ENCODE measurements at regions of chrX and their contacts with region 1.

Region 1: DNA sequence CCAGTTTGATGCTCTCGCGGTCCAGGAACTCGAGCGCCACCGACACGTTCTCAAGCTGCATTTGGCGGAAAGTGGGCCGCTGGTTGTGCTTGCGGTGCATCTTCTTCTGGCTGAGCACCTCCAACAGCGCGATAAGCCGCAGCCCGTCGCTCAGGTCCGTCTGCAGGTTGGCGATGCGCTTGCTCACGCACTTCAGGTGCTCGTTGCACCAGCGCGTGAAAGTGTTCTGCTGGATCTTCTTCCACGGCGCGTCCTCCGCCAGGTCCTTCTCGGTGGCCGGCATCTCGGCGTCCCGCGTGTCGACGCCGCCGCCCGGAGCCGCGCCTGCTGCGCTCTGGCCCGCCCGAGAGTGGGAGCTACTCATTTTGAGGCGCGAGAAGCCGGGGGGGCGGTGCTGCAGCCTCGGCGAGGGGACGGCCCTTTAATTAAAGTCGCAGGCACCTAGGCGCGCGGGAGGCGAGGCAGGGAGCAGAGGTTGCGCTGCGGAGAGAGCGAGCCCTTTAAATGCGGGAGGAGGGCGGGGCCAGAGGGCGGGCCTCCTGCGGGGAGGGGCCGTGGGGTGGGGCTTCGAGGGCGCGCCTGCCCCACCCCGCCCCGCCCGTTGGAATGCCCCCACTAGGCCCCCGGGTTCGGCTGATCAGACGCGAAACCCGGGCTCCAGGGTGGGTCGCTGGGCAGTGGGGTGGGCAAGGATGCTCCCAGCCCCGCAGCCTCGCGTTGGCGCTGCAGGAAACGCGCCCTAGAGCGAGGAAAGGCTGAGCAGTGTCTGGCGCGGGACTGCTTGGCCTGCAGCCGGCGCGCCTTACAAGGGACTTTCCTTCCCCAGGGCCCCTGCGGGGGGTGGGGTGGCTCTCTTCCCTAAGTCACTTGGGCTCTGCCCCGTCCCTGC is 3.3 kb downstream of the FLNA start:
- DNase-seq: peak; percentile 95
- H3K4me3 Mint-ChIP-seq: peak overlapping the region; percentile 79
- H3K27ac Mint-ChIP-seq: peak overlapping the region; percentile 82
- H3K4me1 Mint-ChIP-seq: peaks cover 36% of the 10 kb centered on the region
- H3K27me3 Mint-ChIP-seq: no peaks in the 10 kb centered on the region

Region 2: DNA sequence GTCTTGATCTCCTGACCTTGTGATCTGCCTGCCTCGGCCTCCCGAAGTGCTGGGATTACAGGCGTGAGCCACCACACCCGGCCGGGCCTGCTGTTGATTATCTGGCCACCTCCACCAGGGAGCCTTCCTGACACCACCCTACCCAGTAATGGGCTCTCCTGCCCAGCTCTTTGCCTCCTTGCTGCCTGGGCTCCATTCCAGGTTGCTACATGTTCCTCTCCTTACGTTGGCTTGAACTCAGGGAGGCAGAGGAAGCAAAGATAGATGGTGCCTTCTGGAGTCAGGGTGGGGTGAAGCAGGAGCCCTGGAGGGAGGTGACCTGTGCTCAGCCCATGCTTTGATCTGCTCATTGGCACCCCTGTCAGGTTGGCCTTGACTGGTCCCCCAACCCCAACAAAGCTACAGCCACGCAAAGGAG is 23.0 kb before region 1 on chrX:
- CTCF ChIA-PET with region 1: no interaction called
- POLR2A ChIA-PET with region 1: interaction called, 22 read pairs
- DNase-seq: no peak
- H3K4me3 Mint-ChIP-seq: peak overlapping the region; percentile 30
- H3K27ac Mint-ChIP-seq: peak overlapping the region; percentile 81
- H3K4me1 Mint-ChIP-seq: peaks cover 54% of the 10 kb centered on the region
- H3K27me3 Mint-ChIP-seq: no peaks in the 10 kb centered on the region

Region 3: DNA sequence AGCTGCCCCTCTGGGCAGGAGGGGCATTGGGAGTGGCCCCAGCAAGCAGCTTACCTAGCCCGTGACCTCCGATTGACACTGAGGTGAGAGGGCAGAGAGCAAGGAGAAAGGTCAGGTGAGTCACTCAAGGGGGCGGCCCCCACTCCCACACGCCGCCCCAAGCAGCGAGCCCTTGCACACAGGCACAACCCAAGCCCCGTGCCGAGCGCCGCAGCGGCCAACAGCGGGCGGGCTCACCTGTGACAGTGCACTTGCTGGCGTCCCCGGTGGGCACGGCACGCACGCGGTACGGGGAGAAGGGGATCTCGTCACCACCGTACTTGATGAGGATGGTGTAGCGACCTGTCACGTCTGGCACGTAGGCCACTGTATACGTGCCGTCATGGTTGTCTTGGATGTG is 13.9 kb before region 1 on chrX:
- CTCF ChIA-PET with region 1: no interaction called
- POLR2A ChIA-PET with region 1: interaction called, 23 read pairs
- DNase-seq: no peak
- H3K4me3 Mint-ChIP-seq: no peak overlapping the region
- H3K27ac Mint-ChIP-seq: no peak overlapping the region
- H3K4me1 Mint-ChIP-seq: peaks cover 73% of the 10 kb centered on the region
- H3K27me3 Mint-ChIP-seq: no peaks in the 10 kb centered on the region

Region 4: GRCh38 chrX:154384284-154384892 is 13.3 kb after region 1 on chrX:
- CTCF ChIA-PET with region 1: interaction called, 4 read pairs
- POLR2A ChIA-PET with region 1: interaction called, 17 read pairs
- DNase-seq: no peak
- H3K4me3 Mint-ChIP-seq: no peak overlapping the region
- H3K27ac Mint-ChIP-seq: no peak overlapping the region
- H3K4me1 Mint-ChIP-seq: peaks cover 11% of the 10 kb centered on the region
- H3K27me3 Mint-ChIP-seq: no peaks in the 10 kb centered on the region

Region 5: DNA sequence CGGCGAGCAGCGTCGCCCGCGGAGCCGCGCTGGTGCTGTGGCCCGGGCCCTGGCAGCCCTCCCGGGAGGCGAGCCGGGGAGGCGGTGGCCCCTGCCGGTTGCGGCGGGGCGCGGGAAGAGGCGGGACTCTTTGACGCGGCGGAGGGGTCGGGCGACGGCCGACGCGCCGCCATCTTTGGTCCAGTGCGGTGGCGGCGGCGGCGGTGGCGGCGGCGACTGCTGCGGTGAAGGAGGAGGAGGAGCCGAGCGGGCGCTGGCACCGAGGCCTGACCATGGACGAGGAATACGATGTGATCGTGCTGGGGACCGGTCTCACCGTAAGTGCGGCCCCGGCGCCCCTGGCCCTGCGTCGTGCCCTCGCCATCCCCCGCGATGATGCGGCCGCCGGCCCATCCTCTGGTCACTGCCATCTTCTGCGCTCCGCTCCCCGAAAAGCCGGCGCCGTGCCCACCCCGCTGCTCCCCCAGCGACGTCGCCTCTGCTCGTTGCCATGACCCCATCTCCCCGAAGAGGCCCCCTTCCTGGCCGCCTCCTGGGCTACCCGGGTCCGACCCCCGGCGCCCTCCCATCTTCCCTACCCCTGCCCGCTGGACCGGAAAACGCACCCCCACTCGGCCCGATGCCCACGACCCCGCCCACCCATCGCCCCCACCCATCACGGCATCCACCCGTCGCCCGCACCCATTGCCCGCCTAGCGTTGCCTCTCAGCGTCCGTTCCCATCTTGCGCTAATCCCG is 66.0 kb after region 1 on chrX and contains the start of gene GDI1:
- CTCF ChIA-PET with region 1: no interaction called
- POLR2A ChIA-PET with region 1: no interaction called
- DNase-seq: peak; percentile 59
- H3K4me3 Mint-ChIP-seq: peak within 1 kb of the TSS; percentile 82
- H3K27ac Mint-ChIP-seq: peak within 1 kb of the TSS; percentile 73
- H3K4me1 Mint-ChIP-seq: peaks cover 31% of the 10 kb centered on the region
- H3K27me3 Mint-ChIP-seq: no peaks in the 10 kb centered on the region
- total RNA-seq, gene GDI1: 114 to 117 TPM